ENCODE measurements at regions of chr18 and their contacts with region 1.

Region 1: DNA sequence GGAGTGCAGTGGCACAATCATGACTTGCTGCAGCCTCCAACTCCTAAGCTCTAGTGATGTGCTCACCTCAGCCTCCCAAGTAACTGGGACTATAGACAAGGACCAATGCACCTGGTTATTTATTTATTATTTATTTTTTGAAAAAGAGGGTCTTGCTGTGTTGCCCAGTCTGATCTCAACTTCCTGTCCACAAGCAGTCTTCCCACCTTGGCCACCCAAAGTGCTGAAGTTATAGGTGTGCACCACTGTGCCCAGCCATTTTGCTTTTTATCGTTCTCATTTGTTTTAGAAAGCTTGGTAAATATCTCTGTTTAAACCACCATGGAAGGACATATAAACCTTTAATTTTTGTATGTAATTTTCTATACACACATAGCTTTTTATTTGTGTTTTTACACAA is 74.2 kb downstream of the SMCHD1 start:
- DNase-seq: no peak
- H3K4me3 Mint-ChIP-seq: no peak overlapping the region
- H3K27ac Mint-ChIP-seq: no peak overlapping the region
- H3K4me1 Mint-ChIP-seq: peaks cover 21% of the 10 kb centered on the region
- H3K27me3 Mint-ChIP-seq: no peaks in the 10 kb centered on the region

Region 2: DNA sequence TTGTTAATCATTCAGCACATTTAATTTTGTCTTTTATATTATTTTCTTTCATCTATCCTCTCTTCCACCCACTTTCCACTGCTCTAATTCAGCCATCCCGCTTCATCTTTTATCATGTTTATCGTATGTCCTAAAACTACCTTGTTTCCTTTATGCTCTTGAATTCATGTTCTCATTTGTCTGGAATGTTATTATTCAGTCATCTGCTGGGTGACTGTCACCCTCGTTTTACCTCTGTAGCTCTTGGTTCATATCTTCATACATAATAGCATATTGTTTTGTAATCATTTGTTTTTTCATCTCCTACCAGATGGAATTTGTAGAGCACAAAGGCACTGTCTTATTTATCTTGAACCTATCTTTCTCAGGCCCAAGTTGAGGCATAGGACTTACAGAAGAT is 37.2 kb before region 1 on chr18:
- intact Hi-C with region 1: loop called (anchors 5 kb)
- DNase-seq: no peak
- H3K4me3 Mint-ChIP-seq: no peak overlapping the region
- H3K27ac Mint-ChIP-seq: no peak overlapping the region
- H3K4me1 Mint-ChIP-seq: peaks cover 35% of the 10 kb centered on the region
- H3K27me3 Mint-ChIP-seq: no peaks in the 10 kb centered on the region

Region 3: DNA sequence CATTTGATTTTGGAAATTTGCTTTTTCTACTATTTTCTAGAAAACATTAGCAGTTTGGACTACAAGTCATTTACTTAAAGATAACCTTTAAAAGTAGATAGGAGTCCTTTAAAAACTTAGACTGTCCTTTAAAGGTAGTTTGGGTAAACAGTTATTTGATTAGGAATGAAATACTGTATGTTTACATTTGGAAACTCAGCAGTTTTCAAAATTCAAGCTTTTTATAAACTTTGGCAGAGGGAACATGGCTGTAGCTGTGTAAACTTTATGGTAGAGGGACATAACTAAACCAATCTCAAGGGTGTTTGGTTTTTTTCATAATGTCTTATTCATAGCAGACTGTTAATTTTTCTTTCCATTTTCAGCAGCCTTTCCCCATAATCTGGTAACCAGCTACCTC is 16.5 kb after region 1 on chr18:
- intact Hi-C with region 1: loop called (anchors 2 kb)
- DNase-seq: no peak
- H3K4me3 Mint-ChIP-seq: no peak overlapping the region
- H3K27ac Mint-ChIP-seq: no peak overlapping the region
- H3K4me1 Mint-ChIP-seq: peaks cover 21% of the 10 kb centered on the region
- H3K27me3 Mint-ChIP-seq: no peaks in the 10 kb centered on the region

Region 4: GRCh38 chr18:2758309-2758708 is 28.6 kb after region 1 on chr18:
- intact Hi-C with region 1: loop called (anchors 5 kb)
- DNase-seq: no peak
- H3K4me3 Mint-ChIP-seq: no peak overlapping the region
- H3K27ac Mint-ChIP-seq: peak overlapping the region; percentile 5
- H3K4me1 Mint-ChIP-seq: peaks cover 14% of the 10 kb centered on the region
- H3K27me3 Mint-ChIP-seq: no peaks in the 10 kb centered on the region

Region 5: GRCh38 chr18:2787225-2787624 is 57.5 kb after region 1 on chr18:
- intact Hi-C with region 1: no loop called
- DNase-seq: no peak
- H3K4me3 Mint-ChIP-seq: no peak overlapping the region
- H3K27ac Mint-ChIP-seq: peak overlapping the region; percentile 41
- H3K4me1 Mint-ChIP-seq: no peaks in the 10 kb centered on the region
- H3K27me3 Mint-ChIP-seq: no peaks in the 10 kb centered on the region